ENCODE measurements at regions of chr13 and their contacts with region 1.

Region 1: GRCh38 chr13:30802953-30803478 is 67.7 kb downstream of the ALOX5AP start:
- DNase-seq: peak; percentile 80 to 96 (median 90)

Region 2: DNA sequence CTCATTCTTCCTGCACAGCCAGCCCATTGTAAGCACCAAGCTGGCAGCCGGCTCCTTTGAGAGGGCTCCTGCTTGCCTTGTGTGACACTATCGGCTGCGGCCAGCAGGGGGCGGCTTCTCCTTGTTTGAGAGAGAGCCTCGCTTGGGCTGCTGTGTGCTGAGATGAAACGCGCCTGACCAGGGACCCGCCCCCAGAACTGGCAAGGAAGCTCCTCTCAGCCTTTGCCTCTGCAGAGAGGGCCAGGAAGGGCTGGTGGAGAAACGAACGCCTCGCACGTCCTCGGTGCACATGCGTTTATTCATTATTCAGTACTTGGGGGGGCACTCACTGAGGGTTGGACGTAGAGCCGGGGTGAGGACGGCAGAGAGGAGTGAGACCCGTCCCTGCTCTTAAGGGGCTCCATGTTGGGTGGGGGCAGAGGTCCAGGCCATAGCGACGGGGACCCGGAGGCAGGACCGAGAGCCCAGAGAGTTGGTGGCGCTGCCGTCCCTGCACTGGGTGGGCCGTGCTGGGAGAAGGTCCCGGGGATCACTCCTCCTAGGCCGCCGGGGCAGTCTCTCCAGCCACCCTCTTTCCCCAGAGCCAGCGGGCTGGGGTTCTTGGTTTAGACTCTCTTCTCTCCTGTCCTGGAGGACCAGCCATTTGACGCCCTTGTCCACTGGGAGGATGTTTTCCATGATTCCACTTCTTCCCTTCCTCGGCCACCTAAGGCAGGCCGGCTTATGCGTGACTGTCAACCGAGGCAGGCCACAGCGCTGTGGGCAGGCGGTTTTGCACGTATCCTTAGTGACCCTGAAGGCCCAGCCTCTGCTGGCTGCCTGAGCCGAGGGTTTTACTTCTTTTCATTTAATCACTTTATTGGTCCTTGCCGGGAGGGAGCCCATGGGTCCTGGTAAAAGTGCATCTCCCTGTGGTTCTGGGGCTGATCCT is 670.1 kb before region 1 on chr13:
- intact Hi-C with region 1: loop called (anchors 10 kb)
- DNase-seq: peak; percentile 94 to 100 (median 98)

Region 3: GRCh38 chr13:30196025-30196424 is 607.0 kb before region 1 on chr13:
- intact Hi-C with region 1: no loop called
- DNase-seq: no peak

Region 4: DNA sequence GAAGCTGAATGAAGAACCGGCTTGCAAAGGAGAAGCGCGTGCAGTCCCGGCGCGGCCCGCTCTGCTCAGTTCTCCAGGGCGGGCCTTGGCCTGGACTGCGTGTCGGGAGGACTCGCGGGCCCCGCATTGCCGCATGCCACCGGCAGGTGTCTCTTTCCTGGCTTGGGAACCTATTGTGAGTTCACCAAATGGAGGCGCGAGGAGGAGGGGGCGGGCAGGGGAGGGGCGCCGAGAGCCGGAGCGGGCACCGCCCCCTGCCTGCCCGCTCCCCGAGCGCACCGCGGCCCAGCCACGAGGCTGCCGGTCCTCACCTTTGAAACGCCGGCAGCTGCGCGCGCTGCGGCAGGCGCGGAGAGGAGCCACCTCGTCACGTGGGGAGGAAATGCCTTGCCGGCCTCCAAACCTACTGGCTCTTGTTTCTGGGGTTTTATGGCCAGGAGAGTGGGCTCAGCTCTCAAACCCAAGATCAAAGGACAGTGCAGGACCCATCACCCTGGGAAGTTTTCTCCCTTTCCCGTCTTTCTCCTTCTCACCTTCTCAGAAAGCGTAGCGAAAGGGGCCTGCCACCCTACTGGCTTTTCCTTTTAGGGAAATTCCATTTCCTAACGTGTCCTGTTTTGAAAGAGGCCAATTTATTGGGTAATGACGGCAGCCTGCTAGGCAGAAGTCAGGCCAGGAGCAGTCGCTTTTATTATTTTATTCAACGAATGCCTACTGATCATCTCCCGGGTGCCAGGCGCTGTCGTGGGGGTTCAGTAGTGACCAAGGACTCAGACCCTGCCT is 394.5 kb before region 1 on chr13:
- intact Hi-C with region 1: loop called (anchors 10 kb)
- DNase-seq: peak; percentile 89 to 97 (median 93)

Region 5: DNA sequence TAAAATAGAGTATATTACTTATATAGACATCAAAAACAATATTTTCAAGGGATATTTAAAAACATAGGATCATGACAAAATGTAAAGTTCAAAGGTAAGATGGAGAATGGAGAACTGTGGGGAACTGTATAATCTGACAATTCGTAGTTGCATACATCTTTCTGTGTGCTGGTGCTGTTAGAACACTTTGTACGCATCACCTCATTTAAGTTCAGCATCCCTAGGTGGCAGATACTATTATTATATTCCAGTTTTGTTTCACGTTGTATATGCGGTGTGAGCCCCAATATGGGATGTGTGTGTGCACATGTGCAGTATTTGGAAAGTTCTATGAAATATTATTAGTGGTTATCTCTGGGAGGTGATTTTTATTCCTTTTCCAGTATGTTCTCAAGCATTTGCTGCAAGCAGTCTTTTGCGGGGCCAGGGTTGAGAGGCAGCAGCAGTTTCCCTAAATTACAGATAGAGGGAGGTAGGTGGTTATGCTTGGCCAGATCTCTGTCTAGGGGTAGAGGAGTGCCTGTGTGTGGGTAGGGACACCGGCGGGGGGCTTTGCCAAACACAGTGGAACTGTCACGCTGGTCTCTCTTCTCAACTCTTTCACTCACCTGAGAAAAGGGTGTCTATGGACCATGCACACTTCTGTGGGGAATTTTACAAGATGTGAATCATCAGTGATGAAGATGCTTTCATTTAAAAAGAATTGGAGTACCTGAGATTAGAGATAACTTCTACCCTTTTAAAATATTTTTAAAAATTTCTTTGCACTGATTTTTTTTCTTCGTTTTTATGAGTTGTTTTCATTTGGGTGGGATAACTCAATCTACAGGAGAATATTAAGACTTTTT is 123.3 kb before region 1 on chr13:
- intact Hi-C with region 1: loop called (anchors 5 kb)
- DNase-seq: peak in 34 of 42 donors; percentile 9 to 77 (median 44)

Region 6: GRCh38 chr13:31044377-31045285 is 241.6 kb after region 1 on chr13:
- intact Hi-C with region 1: loop called (anchors 5 kb)
- DNase-seq: peak; percentile 68 to 93 (median 85)

Measured in head of caudate nucleus (tissue), 42 donors.